ENCODE measurements at regions of chr14 and their contacts with region 1.

Region 1: GRCh38 chr14:88189417-88190191 is 133.5 kb downstream of the KCNK10 start:
- DNase-seq: peak; percentile 87
- ATAC-seq: peak; percentile 98
- H3K4me3 ChIP-seq: peak overlapping the region; percentile 33
- H3K27ac ChIP-seq: no peak overlapping the region
- H3K4me1 ChIP-seq: peaks cover 4% of the 10 kb centered on the region; the same call in 1 of the 2 replicates
- H3K27me3 ChIP-seq: peaks cover 4% of the 10 kb centered on the region
- CTCF ChIP-seq: peak; percentile 76
- POLR2A ChIP-seq: no peak
- RAD21 ChIP-seq: peak; percentile 75

Region 2: DNA sequence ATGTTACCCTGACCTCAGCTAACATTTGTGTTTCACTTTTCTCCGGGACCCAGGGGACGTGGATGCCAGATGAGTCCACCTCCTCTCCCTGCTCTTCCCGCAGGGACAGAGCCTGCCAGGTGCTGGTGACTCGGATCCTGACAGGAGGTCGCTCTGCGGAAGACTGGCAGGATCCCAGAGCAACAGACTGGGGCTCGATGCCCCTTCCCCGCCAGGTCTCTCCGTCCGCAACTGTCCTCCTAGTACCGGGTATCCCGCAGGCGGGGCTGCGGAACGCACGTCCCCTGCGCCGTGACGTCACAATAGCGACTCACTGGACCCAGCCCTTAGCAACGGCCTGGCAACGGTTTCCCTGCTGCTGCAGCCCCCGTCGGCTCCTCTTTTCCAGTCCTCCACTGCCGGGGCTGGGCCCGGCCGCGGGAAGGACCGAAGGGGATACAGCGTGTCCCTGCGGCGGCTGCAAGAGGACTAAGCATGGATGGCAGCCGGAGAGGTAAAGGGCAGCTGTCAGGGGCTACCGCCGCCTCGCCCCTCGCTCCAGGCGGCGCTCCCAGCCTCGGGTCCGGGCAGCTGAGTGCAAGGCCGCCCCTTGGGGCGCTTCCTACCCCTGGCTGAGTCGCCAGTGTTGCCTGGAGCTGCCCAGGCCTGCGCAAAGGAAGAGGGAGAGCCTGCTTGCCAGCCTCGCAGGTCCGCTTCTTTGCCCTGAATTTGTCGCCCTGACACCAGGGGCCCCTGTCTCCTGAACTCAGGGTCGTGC is 195.9 kb after region 1 on chr14 and contains the start of gene SPATA7:
- CTCF ChIA-PET with region 1: interaction called, 4 read pairs
- POLR2A ChIA-PET with region 1: no interaction called
- dilution Hi-C with region 1: no loop called
- in situ Hi-C with region 1: no loop called
- intact Hi-C with region 1: loop called (anchors 2 kb)
- DNase-seq: peak; percentile 89
- ATAC-seq: peak; percentile 98
- H3K4me3 ChIP-seq: peak within 1 kb of the TSS; percentile 82
- H3K27ac ChIP-seq: peak within 1 kb of the TSS; percentile 95
- H3K4me1 ChIP-seq: no peaks in the 10 kb centered on the region; the same call in 1 of the 2 replicates
- H3K27me3 ChIP-seq: no peaks in the 10 kb centered on the region
- CTCF ChIP-seq: no peak
- POLR2A ChIP-seq: peak; percentile 51
- RAD21 ChIP-seq: no peak
- total RNA-seq, gene SPATA7: 10.0 and 12.8 TPM in 2 replicates

Region 3: DNA sequence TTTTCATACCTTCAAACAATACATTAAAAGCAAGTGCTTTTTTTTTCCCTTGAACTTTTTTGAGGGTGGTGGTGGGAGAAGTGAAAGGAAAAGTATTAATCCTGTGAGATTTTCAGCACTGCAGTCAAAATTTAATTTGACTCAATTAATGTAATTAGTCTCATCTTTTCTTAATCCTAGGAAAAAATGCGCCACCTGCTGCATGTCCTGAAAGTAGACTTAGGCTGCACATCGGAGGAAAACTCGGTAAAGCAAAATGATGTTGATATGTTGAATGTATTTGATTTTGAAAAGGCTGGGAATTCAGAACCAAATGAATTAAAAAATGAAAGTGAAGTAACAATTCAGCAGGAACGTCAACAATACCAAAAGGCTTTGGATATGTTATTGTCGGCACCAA is 248.1 kb after region 1 on chr14:
- CTCF ChIA-PET with region 1: no interaction called
- POLR2A ChIA-PET with region 1: no interaction called
- dilution Hi-C with region 1: no loop called
- in situ Hi-C with region 1: no loop called
- intact Hi-C with region 1: loop called (anchors 5 kb)
- DNase-seq: no peak
- ATAC-seq: no peak
- H3K4me3 ChIP-seq: no peak overlapping the region
- H3K27ac ChIP-seq: no peak overlapping the region
- H3K4me1 ChIP-seq: no peaks in the 10 kb centered on the region
- H3K27me3 ChIP-seq: no peaks in the 10 kb centered on the region
- CTCF ChIP-seq: peak; percentile 32; the same call in 1 of the 2 replicates
- POLR2A ChIP-seq: no peak
- RAD21 ChIP-seq: 0 out of 2 replicates have a peak, but pooled peaks have one; percentile 21

Region 4: GRCh38 chr14:88492272-88493089 is 302.9 kb after region 1 on chr14:
- CTCF ChIA-PET with region 1: no interaction called
- POLR2A ChIA-PET with region 1: no interaction called
- dilution Hi-C with region 1: no loop called
- in situ Hi-C with region 1: no loop called
- intact Hi-C with region 1: loop called (anchors 1 kb)
- DNase-seq: peak; percentile 81
- ATAC-seq: peak; percentile 96
- H3K4me3 ChIP-seq: no peak overlapping the region
- H3K27ac ChIP-seq: no peak overlapping the region
- H3K4me1 ChIP-seq: 0 out of 2 replicates have a peak, but pooled peaks cover 2% of the 10 kb centered on the region
- H3K27me3 ChIP-seq: no peaks in the 10 kb centered on the region
- CTCF ChIP-seq: peak; percentile 79
- POLR2A ChIP-seq: no peak
- RAD21 ChIP-seq: peak; percentile 66

Region 5: GRCh38 chr14:88551094-88551870 is 361.7 kb after region 1 on chr14:
- CTCF ChIA-PET with region 1: no interaction called
- POLR2A ChIA-PET with region 1: no interaction called
- dilution Hi-C with region 1: no loop called
- in situ Hi-C with region 1: loop called (anchors 10 kb)
- intact Hi-C with region 1: loop called (anchors 2 kb)
- DNase-seq: peak; percentile 82
- ATAC-seq: peak; percentile 68
- H3K4me3 ChIP-seq: peak overlapping the region; percentile 71
- H3K27ac ChIP-seq: peak overlapping the region; percentile 65
- H3K4me1 ChIP-seq: peaks cover 4% of the 10 kb centered on the region; the same call in 1 of the 2 replicates
- H3K27me3 ChIP-seq: no peaks in the 10 kb centered on the region
- CTCF ChIP-seq: peak; percentile 40
- POLR2A ChIP-seq: no peak
- RAD21 ChIP-seq: peak; percentile 39

Region 6: GRCh38 chr14:88562831-88563686 is 373.5 kb after region 1 on chr14 and contains the start of gene ZC3H14:
- CTCF ChIA-PET with region 1: interaction called, 11 read pairs
- POLR2A ChIA-PET with region 1: no interaction called
- dilution Hi-C with region 1: no loop called
- in situ Hi-C with region 1: loop called (anchors 10 kb)
- intact Hi-C with region 1: loop called (anchors 1 kb)
- DNase-seq: peak; percentile 80
- ATAC-seq: peak; percentile 95
- H3K4me3 ChIP-seq: peak within 1 kb of the TSS; percentile 98
- H3K27ac ChIP-seq: peak within 1 kb of the TSS; percentile 94
- H3K4me1 ChIP-seq: peaks cover 6% of the 10 kb centered on the region; the same call in 1 of the 2 replicates
- H3K27me3 ChIP-seq: no peaks in the 10 kb centered on the region
- CTCF ChIP-seq: no peak
- POLR2A ChIP-seq: peak; percentile 61; the same call in 1 of the 2 replicates
- RAD21 ChIP-seq: no peak
- total RNA-seq, gene ZC3H14: 103 and 111 TPM in 2 replicates

Measured in IMR-90 (cell line).